IMR-90 (cell line): ENCODE measurements at regions of chr12 and their contacts with region 1.

Region 1: DNA sequence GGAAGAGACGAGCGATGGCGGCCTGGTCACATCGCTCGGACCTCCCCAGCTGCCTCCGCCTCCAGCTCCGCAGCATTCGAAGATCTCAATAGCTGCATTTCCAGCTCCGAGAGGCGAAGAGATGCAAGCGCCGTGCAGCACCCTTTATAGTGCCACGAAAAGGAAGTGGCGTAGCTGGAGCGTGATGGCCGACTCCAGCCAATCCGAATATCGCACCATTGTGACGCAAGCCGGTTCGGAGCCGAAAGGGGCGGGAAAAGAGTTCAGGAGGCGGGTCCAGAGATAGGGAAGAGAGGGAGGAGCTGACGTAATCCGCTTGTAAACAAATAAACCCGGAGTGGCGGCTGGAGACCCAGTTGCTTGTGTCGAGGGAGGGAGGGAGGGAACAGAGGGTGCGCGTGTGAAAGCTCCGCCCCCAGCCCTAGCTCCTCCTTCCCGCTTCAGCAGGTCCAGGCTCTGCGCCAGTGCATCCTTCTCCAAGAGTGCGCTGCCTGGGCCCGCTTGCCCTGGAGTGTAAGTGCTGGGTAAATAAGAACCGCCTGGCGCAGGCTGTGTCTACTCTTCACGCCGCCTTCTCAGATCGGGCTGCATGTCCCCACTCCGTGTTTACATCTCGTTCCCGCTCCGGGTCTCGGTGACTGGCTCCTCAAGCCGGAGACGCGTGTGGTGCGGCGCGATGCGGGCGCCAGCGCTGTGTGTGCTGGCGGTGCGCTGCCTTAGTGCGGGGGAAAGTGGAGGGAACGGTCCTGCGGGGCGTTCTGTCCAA is at the start of gene BTG1:
- DNase-seq: peak; percentile 100
- ATAC-seq: peak; percentile 85
- H3K4me3 ChIP-seq: peak within 1 kb of the TSS; percentile 88
- H3K27ac ChIP-seq: peak within 1 kb of the TSS; percentile 92
- H3K4me1 ChIP-seq: no peaks in the 10 kb centered on the region
- H3K27me3 ChIP-seq: no peaks in the 10 kb centered on the region
- CTCF ChIP-seq: 0 out of 2 replicates have a peak, but pooled peaks have one; percentile 7
- POLR2A ChIP-seq: peak; percentile 100
- RAD21 ChIP-seq: peak; percentile 32
- total RNA-seq, gene BTG1: 3.8 and 8.1 TPM in 2 replicates

Region 2: GRCh38 chr12:91577586-91578539 is 568.1 kb before region 1 on chr12:
- CTCF ChIA-PET with region 1: interaction called, 3 read pairs
- POLR2A ChIA-PET with region 1: no interaction called
- dilution Hi-C with region 1: no loop called
- in situ Hi-C with region 1: no loop called
- intact Hi-C with region 1: loop called (anchors 1 kb)
- DNase-seq: peak; percentile 35
- ATAC-seq: peak; percentile 74
- H3K4me3 ChIP-seq: peak overlapping the region; percentile 39; the same call in 1 of the 2 replicates
- H3K27ac ChIP-seq: no peak overlapping the region
- H3K4me1 ChIP-seq: no peaks in the 10 kb centered on the region
- H3K27me3 ChIP-seq: no peaks in the 10 kb centered on the region; the same call in 1 of the 2 replicates
- CTCF ChIP-seq: peak; percentile 59
- POLR2A ChIP-seq: no peak
- RAD21 ChIP-seq: peak; percentile 52

Region 3: DNA sequence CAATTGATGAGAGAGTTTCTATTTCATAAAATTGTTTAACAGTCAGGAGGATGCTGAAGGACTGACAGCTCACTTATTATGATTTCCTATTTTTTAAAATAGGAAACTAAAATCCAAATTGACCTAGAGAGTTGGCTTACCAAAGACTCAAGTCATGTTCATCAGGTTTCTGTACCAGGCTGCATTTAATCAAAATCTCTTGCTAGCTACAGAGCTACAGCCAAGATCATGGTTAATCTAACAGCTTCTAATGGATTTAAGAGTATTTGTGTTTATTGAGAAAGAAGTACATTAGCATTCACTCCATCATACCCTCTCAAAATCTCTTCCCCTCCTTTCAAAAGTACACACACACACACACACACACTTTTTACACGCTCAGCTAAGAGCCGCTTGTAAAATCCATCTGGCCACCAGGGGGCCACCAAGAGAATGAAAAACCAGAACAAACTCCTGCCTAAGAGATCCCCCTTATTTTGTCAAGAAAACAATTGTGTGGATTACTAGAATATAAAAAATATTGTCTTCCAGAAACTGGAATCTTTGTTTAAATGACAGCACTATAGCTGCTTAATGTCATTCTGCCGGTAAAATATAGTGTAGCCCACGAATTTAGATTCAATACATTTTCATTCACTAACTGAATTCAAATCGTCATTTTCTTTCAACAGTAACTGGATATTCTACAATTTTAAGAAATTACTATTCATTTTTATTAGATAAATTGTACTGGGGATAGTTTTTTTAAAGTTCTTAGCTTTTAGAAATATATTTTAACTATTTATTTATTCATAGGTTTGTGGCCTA is 334.2 kb before region 1 on chr12:
- CTCF ChIA-PET with region 1: interaction called, 9 read pairs
- POLR2A ChIA-PET with region 1: interaction called, 3 read pairs
- dilution Hi-C with region 1: no loop called
- in situ Hi-C with region 1: no loop called
- intact Hi-C with region 1: loop called (anchors 1 kb)
- DNase-seq: peak; percentile 72
- ATAC-seq: peak; percentile 79
- H3K4me3 ChIP-seq: no peak overlapping the region
- H3K27ac ChIP-seq: no peak overlapping the region
- H3K4me1 ChIP-seq: no peaks in the 10 kb centered on the region
- H3K27me3 ChIP-seq: no peaks in the 10 kb centered on the region
- CTCF ChIP-seq: peak; percentile 69
- POLR2A ChIP-seq: no peak
- RAD21 ChIP-seq: peak; percentile 74

Region 4: GRCh38 chr12:92059976-92060375 is 85.9 kb before region 1 on chr12:
- CTCF ChIA-PET with region 1: interaction called, 3 read pairs
- POLR2A ChIA-PET with region 1: no interaction called
- dilution Hi-C with region 1: no loop called
- in situ Hi-C with region 1: no loop called
- intact Hi-C with region 1: loop called (anchors 5 kb)
- DNase-seq: peak; percentile 82
- ATAC-seq: peak; percentile 48
- H3K4me3 ChIP-seq: no peak overlapping the region
- H3K27ac ChIP-seq: peak overlapping the region; percentile 64
- H3K4me1 ChIP-seq: peaks cover 15% of the 10 kb centered on the region
- H3K27me3 ChIP-seq: no peaks in the 10 kb centered on the region
- CTCF ChIP-seq: no peak
- POLR2A ChIP-seq: no peak
- RAD21 ChIP-seq: no peak

Region 5: DNA sequence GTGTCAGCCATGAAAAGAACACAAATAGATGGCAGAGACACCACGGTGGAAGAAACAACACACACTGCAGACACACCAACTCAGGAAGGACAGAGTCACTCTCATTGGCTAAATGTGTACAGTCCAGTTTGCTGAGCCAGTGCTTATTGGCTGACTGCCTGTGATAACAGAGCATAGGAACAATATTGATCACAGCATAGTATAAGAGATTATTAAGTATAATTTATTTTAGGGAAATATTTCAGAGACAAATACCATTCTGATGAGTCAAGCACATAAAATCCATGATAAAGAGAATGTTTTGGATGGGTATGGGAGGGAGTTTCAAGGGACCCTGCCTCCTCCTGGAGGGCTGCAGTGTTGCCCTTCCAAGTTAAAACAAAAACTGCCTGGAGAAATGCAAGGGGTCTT is 51.2 kb before region 1 on chr12:
- CTCF ChIA-PET with region 1: no interaction called
- POLR2A ChIA-PET with region 1: no interaction called
- dilution Hi-C with region 1: no loop called
- in situ Hi-C with region 1: no loop called
- intact Hi-C with region 1: no loop called
- DNase-seq: peak; percentile 30
- ATAC-seq: peak; percentile 72
- H3K4me3 ChIP-seq: no peak overlapping the region
- H3K27ac ChIP-seq: peak overlapping the region; percentile 68
- H3K4me1 ChIP-seq: peaks cover 10% of the 10 kb centered on the region
- H3K27me3 ChIP-seq: no peaks in the 10 kb centered on the region
- CTCF ChIP-seq: 0 out of 2 replicates have a peak, but pooled peaks have one; percentile 17
- POLR2A ChIP-seq: no peak
- RAD21 ChIP-seq: peak; percentile 20; the same call in 1 of the 2 replicates

Region 6: DNA sequence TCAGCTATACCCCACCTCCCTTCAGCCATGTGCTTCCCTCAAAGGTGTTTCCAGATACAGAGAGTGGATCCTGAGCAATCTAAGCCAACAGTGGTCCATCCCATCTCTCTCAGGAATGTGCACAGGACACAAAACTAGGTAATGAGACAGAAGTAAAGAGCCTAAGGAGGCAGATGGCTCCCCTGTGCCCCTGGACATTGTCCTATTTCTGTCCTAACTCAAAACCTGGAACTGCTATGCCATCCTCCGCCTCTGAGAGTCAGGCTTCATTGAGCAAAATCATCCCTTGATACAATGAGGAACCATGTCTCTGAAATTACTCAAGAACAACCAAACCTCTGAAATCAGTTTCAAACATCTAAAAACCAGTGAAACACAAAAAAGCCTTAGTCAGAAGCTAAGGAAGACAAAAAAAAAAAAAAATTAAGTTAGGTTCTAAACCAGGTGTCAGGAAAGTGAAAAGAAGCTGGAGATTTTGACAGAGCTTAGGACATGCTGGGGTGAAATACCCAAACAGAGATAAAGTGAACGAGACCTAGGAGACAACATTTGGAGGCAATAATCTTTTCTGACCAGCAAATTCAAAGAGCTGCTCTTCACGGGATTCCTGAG is 356.6 kb after region 1 on chr12:
- CTCF ChIA-PET with region 1: no interaction called
- POLR2A ChIA-PET with region 1: no interaction called
- dilution Hi-C with region 1: no loop called
- in situ Hi-C with region 1: no loop called
- intact Hi-C with region 1: loop called (anchors 2 kb)
- DNase-seq: no peak
- ATAC-seq: no peak
- H3K4me3 ChIP-seq: no peak overlapping the region
- H3K27ac ChIP-seq: no peak overlapping the region
- H3K4me1 ChIP-seq: peaks cover 22% of the 10 kb centered on the region
- H3K27me3 ChIP-seq: no peaks in the 10 kb centered on the region
- CTCF ChIP-seq: no peak
- POLR2A ChIP-seq: no peak
- RAD21 ChIP-seq: no peak